Posterior vena cava (tissue), 2 donors: ENCODE measurements at regions of chr10 and their contacts with region 1.

Region 1: DNA sequence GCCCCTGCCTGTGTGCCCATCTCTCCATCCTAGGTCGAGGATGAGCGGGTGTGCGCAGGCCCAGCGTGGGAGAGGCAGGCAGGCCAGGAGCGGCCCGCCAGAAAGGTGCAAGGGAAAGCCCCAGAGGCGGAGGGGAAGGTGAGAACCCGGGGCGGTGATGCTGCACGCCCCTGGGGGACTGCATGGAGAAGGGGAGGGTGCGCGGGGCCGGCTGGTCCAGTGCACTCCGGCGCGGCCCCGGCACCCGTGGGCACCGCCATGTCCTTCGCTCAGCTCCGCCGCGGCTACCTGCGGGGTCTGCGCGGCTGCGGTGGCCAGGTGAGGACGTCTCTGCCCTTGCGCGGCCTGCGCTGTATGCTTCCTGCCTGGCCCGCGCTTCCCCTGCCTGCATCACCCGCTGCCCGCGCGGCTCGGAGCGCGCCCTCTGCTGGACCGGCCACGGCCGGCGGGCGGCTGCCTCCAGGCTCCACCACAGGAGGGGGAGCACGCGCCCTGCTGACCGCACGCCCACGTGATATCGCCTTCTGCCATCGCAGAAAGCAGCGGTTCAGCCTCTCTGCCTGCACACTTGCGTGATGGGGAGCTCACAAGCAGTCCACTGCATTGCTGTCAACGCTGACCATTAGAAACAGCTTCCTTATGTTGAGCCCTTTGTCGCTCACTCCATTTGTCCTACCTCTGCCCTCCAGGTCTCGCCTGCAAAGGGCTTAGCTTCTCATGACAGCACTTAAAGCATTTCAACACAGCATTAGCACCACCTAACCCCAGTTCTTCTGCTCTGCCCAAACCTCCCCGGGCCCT is 73.9 kb downstream of the CXCL12 start:
- DNase-seq: peak; percentile 96

Region 2: DNA sequence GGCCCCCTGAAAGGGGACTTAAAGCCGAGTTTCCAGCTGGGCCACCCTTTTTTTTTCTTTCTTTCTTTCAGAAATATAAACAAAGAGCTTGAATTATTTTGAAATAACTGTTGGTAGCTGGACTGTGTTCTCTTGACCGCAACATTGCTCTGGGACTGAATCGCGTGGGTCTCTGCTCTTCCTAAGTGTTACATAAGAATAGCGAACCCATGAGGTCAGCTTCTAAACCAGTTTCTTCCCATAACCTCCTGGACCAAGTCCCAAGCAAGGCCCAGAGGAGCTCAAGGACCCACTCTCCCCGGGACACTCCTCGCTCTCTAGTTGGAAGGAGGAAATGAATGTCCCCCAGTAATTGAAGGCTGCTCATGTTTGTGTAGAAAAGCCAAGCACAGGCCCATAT is 17.1 kb before region 1 on chr10:
- intact Hi-C with region 1: no loop called
- DNase-seq: no peak

Region 3: GRCh38 chr10:44864637-44865288 is 553.8 kb after region 1 on chr10:
- intact Hi-C with region 1: loop called in 1 of 2 experiments (anchors 10 kb)
- DNase-seq: peak; percentile 97